Astrocyte of the cerebellum (primary cell): ENCODE measurements at regions of chr3 and their contacts with region 1.

Region 1: DNA sequence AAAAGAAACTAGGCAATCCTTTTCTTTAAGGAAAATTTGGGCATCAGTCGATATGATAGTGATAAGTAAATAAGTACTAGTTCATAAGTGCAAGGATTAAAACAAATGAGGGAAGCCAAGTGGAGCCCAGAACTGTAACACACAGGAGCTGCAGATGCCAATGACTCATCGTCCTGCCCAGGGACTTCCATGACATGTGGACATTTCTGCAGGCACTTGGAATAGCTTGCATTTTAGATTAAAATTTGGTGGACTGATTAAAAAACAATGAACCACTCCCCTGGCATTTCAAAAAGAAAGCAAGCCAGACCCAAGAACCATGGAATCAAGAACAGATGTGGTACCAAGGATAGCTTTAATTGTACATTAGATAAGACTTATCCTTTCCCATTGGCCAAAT is 2.9 kb downstream of the SAMD7 start:
- DNase-seq: no peak
- H3K4me3 ChIP-seq: no peak overlapping the region
- CTCF ChIP-seq: no peak

Region 2: DNA sequence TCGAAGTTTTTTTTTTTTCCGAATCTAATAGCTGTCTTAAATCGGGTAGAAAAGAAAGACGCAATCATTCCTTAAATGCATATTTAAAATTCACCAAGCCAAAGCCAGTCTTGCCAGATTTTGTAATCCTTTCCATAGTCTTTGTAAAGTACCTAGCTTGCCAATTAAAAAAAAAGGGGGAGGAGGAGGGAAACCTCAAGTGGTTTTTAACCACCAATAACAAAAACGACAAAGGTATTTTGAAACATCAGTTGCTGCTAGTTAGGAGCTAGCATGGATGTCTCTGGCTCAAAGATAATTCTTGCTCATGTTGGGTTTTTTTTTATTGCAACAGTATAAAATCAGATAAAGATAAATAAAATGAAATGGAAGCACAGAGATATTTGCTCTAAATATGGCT is 438.7 kb before region 1 on chr3:
- in situ Hi-C with region 1: no loop called
- DNase-seq: peak; percentile 11
- H3K4me3 ChIP-seq: no peak overlapping the region
- CTCF ChIP-seq: no peak

Region 3: DNA sequence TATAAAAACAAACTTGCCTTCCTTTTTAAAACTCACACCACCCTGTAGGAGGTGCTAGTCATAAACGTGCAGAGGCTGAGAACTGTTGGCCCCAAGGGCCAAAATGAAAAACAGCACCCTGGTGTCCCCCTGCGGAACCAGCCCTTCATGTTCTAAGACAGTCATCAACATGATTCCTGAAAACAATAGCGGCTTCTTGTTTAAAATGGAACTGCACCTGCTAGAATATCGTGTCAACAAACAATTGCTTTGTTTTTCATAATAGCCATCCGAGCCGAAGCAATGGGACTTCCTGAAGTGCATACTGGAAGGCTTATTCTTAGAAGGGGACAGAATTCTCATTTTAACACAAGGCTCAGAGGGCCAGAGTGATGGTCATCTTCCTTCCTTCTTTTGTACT is 294.5 kb before region 1 on chr3:
- in situ Hi-C with region 1: no loop called
- DNase-seq: no peak
- H3K4me3 ChIP-seq: no peak overlapping the region
- CTCF ChIP-seq: no peak

Region 4: DNA sequence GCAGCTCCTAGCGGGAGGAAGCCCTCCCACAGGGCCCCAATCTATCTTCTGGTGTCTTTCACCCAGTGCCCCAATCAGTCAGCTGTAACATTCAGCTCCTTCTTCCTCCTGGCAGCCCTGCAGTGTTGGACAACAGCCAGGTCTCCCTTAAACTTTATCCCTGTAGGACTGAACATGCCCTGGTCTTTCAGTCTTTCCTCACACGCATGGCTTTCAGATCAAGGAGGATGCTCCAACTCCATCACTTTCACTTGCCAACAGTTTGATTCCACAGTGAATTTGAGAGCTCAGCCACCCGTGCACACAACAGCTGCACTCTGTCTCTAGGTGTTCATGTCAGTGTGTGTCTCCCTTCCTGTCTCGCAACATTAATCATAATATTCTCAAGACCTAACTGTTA is 73.2 kb before region 1 on chr3:
- in situ Hi-C with region 1: loop called (anchors 5 kb)
- DNase-seq: no peak
- H3K4me3 ChIP-seq: no peak overlapping the region
- CTCF ChIP-seq: no peak

Region 5: GRCh38 chr3:169966428-169966950 is 52.2 kb after region 1 on chr3 and contains the start of gene SEC62:
- in situ Hi-C with region 1: no loop called
- DNase-seq: peak; percentile 82
- H3K4me3 ChIP-seq: peak within 1 kb of the TSS; percentile 72
- CTCF ChIP-seq: peak; percentile 49